ENCODE measurements at regions of chr1 and their contacts with region 1.

Region 1: GRCh38 chr1:221435504-221435904 is 306.4 kb downstream of the DUSP10 start:
- DNase-seq: peak; percentile 78
- H3K4me3 ChIP-seq: no peak overlapping the region
- H3K27ac ChIP-seq: no peak overlapping the region
- H3K4me1 ChIP-seq: peaks cover 29% of the 10 kb centered on the region
- H3K27me3 ChIP-seq: no peaks in the 10 kb centered on the region

Region 2: DNA sequence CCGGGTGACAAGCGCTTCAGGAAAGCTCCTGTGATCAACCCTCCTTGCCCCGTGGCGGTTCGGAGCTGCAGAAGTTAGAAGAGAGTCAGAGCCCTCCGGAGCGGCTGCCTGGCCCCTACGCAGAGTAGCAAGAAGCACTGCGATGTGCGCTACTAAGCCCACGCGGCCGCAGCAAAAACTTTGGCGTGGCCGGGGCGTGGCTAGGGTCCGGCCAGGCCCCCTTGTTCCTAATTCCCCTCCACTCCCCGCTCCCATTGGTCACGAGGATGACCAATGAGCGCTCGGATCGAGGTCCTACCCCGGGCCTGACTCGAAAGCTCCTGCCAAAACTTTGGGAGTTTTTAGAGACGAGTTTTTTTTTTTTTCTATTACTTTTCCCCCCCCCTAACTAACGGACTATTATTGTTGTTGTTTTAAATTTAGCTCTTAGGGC is 556.4 kb before region 1 on chr1 and contains the start of gene HLX:
- in situ Hi-C with region 1: loop called (anchors 10 kb)
- DNase-seq: peak; percentile 98
- H3K4me3 ChIP-seq: peak within 1 kb of the TSS; percentile 96
- H3K27ac ChIP-seq: peak within 1 kb of the TSS; percentile 86
- H3K4me1 ChIP-seq: peaks cover 11% of the 10 kb centered on the region
- H3K27me3 ChIP-seq: no peaks in the 10 kb centered on the region
- total RNA-seq, gene HLX: 14.0 and 24.2 TPM in 2 replicates

Region 3: DNA sequence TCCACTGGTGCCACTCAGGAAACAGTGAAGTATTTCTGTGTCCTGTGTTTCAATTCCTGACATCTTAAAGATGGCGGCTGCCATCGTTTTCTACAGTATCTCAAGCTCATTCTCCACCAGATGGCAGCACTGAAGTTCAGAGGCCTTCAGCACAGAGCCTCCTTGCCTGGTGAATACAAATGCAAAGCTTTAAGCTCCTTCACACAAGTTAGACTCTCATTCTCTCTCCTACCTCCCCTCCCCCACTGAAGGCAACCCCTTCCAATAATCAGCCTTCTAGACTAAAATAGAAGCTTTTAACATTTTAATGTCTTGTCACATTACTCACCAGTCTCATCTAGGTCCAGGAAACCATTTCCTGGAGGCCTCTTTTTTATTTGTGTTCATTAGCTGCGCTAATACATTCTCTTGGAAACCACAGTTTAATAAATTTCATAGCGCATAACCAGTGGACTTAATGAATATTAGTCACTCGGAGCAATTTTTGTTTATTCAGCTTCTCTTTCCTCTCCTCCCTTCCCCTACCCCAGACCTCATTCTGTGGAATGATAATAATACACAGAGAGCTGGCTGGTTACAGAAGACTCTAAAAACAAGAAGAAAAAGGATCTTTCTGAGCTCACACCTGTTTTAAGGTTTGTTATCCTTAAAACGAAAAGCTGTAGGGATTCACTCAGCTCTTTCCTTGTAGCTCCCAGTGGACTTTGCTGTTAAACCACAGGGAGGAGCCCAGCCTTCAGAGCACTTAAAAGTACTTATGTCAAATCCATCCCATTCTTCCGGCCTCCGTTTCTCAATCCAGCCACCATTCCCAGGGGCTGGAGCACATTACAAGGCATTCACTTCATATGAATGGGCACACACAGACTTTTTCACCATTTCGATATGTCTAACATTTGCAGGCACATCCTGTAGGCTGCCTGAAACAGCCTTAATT is 171.4 kb before region 1 on chr1:
- in situ Hi-C with region 1: loop called (anchors 5 kb)
- DNase-seq: peak; percentile 93
- H3K4me3 ChIP-seq: no peak overlapping the region
- H3K27ac ChIP-seq: no peak overlapping the region
- H3K4me1 ChIP-seq: peaks cover 20% of the 10 kb centered on the region
- H3K27me3 ChIP-seq: no peaks in the 10 kb centered on the region